A549 (cell line): ENCODE measurements at regions of chr5 and their contacts with region 1.

Region 1: DNA sequence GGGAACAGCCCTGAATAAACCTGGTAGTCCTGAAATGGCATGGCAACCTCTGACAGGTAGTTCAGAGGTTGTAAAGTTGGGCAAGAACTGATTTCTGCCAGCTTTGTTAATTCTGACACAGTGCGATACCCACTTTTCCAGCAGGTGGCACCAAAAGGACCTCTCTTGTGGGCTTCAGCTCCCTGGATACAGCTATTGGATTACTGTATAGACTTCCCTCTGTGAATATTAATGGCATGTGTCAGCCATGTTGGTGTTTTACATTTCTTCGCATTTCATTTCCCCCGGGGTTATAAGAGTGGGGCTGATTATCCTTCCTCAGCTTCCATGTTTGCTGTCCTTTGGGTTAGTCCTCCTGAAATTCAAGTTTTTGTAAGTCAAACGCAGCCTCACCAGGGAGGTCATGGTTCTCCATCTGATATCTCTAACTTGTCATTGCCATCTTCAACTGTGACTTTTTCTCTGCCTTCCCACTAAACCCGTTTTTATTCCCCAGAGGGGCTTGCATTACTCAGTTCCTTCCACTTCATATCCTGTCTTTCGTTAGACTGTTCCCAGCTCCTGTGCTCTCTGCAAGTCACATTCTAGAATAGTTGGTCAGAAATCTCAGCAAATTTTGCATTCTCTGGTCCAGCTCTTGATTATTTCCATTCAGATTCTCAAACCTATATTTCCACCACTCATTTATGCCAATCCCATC is 135.6 kb downstream of the LIFR start:
- DNase-seq: peak; percentile 73 to 80
- ATAC-seq: peak; percentile 93 to 97
- H3K4me3 ChIP-seq: no peak overlapping the region
- H3K27ac ChIP-seq: no peak overlapping the region
- H3K4me1 ChIP-seq: no peaks in the 10 kb centered on the region
- CTCF ChIP-seq: peak; percentile 86
- EP300 ChIP-seq: no peak
- POLR2A ChIP-seq: no peak
- RAD21 ChIP-seq: peak; percentile 76 to 83

Region 2: GRCh38 chr5:38433160-38433861 is 12.5 kb after region 1 on chr5:
- CTCF ChIA-PET with region 1: interaction called, 23 read pairs
- POLR2A ChIA-PET with region 1: no interaction called
- DNase-seq: no peak
- ATAC-seq: peak; percentile 32 to 45; a peak in 3 of 6 replicates
- H3K4me3 ChIP-seq: no peak overlapping the region
- H3K27ac ChIP-seq: no peak overlapping the region
- H3K4me1 ChIP-seq: no peaks in the 10 kb centered on the region
- CTCF ChIP-seq: no peak
- EP300 ChIP-seq: no peak
- POLR2A ChIP-seq: no peak
- RAD21 ChIP-seq: no peak

Region 3: DNA sequence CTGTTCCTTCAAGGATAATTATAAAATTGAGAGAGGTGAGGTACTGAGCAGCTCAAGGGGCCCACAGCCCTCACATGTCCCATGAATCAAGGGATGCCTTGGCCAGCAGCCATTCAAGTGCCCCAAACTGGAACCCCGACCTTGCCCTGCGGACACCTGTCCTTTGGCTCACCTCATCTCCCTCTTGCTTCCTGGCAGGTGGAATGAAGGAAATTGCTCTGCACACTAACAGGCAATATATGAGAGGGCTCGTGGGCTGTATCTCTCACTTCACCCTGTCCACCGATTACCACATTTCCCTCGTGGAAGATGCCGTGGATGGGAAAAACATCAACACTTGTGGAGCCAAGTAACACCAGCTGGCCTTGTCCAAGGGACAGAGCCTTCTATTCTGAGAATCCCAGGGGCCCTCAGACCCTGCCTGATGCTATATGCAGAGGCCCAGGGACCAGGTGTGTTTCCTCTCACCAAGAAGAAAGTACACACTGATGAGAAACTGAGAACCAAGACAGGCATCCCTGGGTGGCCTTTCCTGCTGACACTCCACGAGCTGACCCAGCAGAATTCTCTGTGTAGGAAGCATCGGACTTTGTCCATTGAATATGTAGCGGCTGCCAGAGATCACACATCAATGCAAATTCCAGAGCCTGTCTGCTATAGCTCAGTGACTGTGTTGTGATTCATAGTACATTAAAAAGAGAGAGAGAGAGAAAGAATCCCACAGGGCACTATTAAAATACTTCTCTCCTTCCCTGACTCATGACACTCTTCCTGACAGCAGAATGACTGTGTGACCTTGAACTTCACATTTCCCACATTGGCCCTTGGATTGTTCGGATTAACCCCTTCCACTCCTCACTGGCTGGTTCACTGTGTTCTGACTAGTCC is 43.0 kb after region 1 on chr5:
- CTCF ChIA-PET with region 1: interaction called, 11 read pairs
- POLR2A ChIA-PET with region 1: no interaction called
- DNase-seq: peak; percentile 57 to 82
- ATAC-seq: peak; percentile 79 to 87
- H3K4me3 ChIP-seq: no peak overlapping the region
- H3K27ac ChIP-seq: peak overlapping the region; percentile 73 to 85
- H3K4me1 ChIP-seq: peaks cover 61% of the 10 kb centered on the region
- CTCF ChIP-seq: no peak
- EP300 ChIP-seq: peak; percentile 61 to 83; a peak in 3 of 5 replicates
- POLR2A ChIP-seq: no peak
- RAD21 ChIP-seq: peak in 1 of 2 experiments; percentile 5; a peak in 1 of 5 replicates

Region 4: GRCh38 chr5:38607396-38607795 is 186.6 kb after region 1 on chr5:
- CTCF ChIA-PET with region 1: no interaction called
- POLR2A ChIA-PET with region 1: no interaction called
- DNase-seq: peak in 1 of 2 experiments; percentile 35
- ATAC-seq: peak; percentile 54 to 66; a peak in 4 of 6 replicates
- H3K4me3 ChIP-seq: no peak overlapping the region
- H3K27ac ChIP-seq: peak overlapping the region; percentile 32 to 46; a peak in 2 of 6 replicates
- H3K4me1 ChIP-seq: peaks cover 19% of the 10 kb centered on the region
- CTCF ChIP-seq: no peak
- EP300 ChIP-seq: no peak
- POLR2A ChIP-seq: no peak
- RAD21 ChIP-seq: no peak